Ascending aorta (tissue), 2 donors: ENCODE measurements at regions of chr1 and their contacts with region 1.

Region 1: DNA sequence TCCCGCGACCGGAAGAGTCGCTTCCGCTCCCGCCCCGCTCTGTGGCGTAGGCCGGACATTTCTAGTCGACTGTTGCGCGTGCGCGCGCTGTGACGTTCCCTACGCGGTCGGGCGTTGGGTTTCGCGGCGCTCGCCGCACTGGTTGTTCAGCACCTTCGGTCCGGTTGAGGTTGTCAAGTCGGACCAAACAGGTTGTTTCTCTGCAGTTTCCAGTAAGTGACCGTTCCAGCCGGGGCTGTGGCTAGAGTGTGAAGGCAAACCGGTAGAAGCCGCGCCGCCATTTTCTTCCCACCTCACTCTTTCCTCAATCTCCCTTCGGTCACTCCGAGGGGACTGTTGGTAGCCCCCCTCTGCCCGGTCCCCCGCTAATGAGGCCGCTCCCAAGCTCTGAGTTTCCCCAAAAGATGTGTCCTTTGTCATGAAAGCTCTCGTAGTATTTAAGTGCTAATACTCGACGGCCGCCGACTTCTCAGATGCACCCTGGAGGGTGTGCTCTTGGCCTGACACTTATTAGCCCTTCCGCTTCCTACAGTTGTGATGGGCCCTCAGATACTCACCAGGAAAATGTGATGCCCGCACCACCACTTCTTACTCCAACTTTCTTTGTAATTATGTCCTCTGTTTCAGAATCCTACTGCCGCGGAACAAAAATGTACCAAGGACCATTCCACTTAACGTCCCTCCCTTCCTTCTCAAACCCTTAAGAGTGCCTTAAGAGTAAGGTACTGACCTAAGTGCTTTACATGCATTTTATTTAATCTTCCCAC is 56.3 kb downstream of the TRAF5 start:
- DNase-seq: peak; percentile 59 to 96
- H3K4me3 ChIP-seq: peak overlapping the region; percentile 71 to 96
- H3K27ac ChIP-seq: peak overlapping the region; percentile 93 to 100
- H3K4me1 ChIP-seq: no peaks in the 10 kb centered on the region
- H3K27me3 ChIP-seq: no peaks in the 10 kb centered on the region
- CTCF ChIP-seq: peak in 1 of 3 experiments; percentile 3

Region 2: GRCh38 chr1:211088156-211088555 is 294.7 kb before region 1 on chr1:
- intact Hi-C with region 1: no loop called
- DNase-seq: no peak
- H3K4me3 ChIP-seq: no peak overlapping the region
- H3K27ac ChIP-seq: no peak overlapping the region
- H3K4me1 ChIP-seq: no peaks in the 10 kb centered on the region
- H3K27me3 ChIP-seq: no peaks in the 10 kb centered on the region
- CTCF ChIP-seq: no peak

Region 3: GRCh38 chr1:211415700-211416099 is 32.8 kb after region 1 on chr1:
- intact Hi-C with region 1: loop called (anchors 5 kb)
- DNase-seq: no peak
- H3K4me3 ChIP-seq: peak overlapping the region; percentile 60 to 66
- H3K27ac ChIP-seq: peak overlapping the region; percentile 54 to 80
- H3K4me1 ChIP-seq: no peaks in the 10 kb centered on the region
- H3K27me3 ChIP-seq: no peaks in the 10 kb centered on the region
- CTCF ChIP-seq: no peak

Region 4: GRCh38 chr1:211648980-211649934 is 266.4 kb after region 1 on chr1:
- intact Hi-C with region 1: loop called (anchors 10 kb)
- DNase-seq: peak in 1 of 2 donors; percentile 78
- H3K4me3 ChIP-seq: no peak overlapping the region
- H3K27ac ChIP-seq: no peak overlapping the region
- H3K4me1 ChIP-seq: peaks cover 0 to 7% of the 10 kb centered on the region in 2 donors
- H3K27me3 ChIP-seq: no peaks in the 10 kb centered on the region
- CTCF ChIP-seq: peak; percentile 52 to 85 (median 79)